AG04450 (cell line): ENCODE measurements at regions of chr6 and their contacts with region 1.

Region 1: DNA sequence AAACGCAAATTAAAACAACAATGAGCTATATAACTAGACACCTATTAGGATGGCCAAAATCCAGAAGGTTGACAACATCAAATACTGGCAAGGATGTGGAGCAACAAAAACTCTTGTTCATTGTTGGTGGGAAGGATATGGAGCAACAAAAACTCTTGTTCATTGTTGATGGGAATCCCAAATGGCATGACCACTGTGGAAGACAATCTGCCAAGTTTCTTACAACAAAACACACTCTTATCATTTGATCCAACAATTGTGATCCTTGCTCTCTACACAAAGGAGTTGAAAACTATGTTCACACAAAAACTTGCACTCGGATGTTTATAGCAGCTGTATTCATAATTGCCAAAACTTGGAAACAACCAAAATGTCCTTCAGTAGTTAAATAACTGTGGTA is 61.8 kb upstream of the LAMA2 start:
- DNase-seq: no peak
- H3K4me3 ChIP-seq: no peak overlapping the region
- H3K27ac ChIP-seq: no peak overlapping the region
- H3K27me3 ChIP-seq: no peaks in the 10 kb centered on the region
- CTCF ChIP-seq: no peak

Region 2: GRCh38 chr6:128807577-128807976 is 13.5 kb before region 1 on chr6:
- CTCF ChIA-PET with region 1: interaction called, 10 read pairs
- POLR2A ChIA-PET with region 1: no interaction called
- DNase-seq: peak; percentile 11
- H3K4me3 ChIP-seq: no peak overlapping the region
- H3K27ac ChIP-seq: no peak overlapping the region
- H3K27me3 ChIP-seq: no peaks in the 10 kb centered on the region
- CTCF ChIP-seq: peak; percentile 69